HEK293 (cell line): ENCODE measurements at regions of chr17 and their contacts with region 1.

Region 1: GRCh38 chr17:27892866-27893769 is at the start of gene LYRM9:
- H3K4me3 ChIP-seq: peak within 1 kb of the TSS; percentile 63
- H3K27ac ChIP-seq: peak within 1 kb of the TSS; percentile 77; the same call in 1 of the 2 replicates
- H3K4me1 ChIP-seq: no peaks in the 10 kb centered on the region
- CTCF ChIP-seq: peak; percentile 68; the same call in 1 of the 2 replicates

Region 2: GRCh38 chr17:27879987-27880608 is 13.0 kb before region 1 on chr17:
- CTCF ChIA-PET with region 1: interaction called, 54 read pairs
- POLR2A ChIA-PET with region 1: interaction called, 9 read pairs
- H3K4me3 ChIP-seq: no peak overlapping the region
- H3K27ac ChIP-seq: no peak overlapping the region
- H3K4me1 ChIP-seq: no peaks in the 10 kb centered on the region
- CTCF ChIP-seq: peak; percentile 73

Region 3: GRCh38 chr17:27907976-27908558 is 14.9 kb after region 1 on chr17:
- CTCF ChIA-PET with region 1: interaction called, 19 read pairs
- POLR2A ChIA-PET with region 1: interaction called, 3 read pairs
- H3K4me3 ChIP-seq: no peak overlapping the region
- H3K27ac ChIP-seq: no peak overlapping the region
- H3K4me1 ChIP-seq: no peaks in the 10 kb centered on the region
- CTCF ChIP-seq: no peak

Region 4: DNA sequence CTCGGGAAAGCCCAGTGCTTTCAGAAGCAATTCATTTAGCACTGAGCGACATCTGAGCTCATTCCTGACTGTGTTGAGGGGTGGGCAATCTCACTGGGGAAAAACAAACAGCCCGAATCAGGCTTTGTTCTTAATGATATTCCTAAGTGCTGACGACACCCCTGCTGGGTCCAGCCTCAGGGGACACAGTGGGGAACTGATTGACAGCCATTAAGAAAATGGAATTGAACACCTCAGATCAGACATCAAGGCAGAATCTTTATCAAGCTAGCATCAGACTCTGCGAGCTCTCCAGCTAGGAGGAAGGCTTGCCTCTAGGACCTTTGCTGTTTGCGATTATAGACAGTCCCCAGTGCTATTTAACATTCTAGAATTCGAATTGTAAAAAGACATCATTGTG is 22.6 kb after region 1 on chr17:
- CTCF ChIA-PET with region 1: interaction called, 7 read pairs
- POLR2A ChIA-PET with region 1: interaction called, 12 read pairs
- H3K4me3 ChIP-seq: no peak overlapping the region
- H3K27ac ChIP-seq: no peak overlapping the region
- H3K4me1 ChIP-seq: peaks cover 5% of the 10 kb centered on the region; the same call in 1 of the 2 replicates
- CTCF ChIP-seq: no peak

Region 5: DNA sequence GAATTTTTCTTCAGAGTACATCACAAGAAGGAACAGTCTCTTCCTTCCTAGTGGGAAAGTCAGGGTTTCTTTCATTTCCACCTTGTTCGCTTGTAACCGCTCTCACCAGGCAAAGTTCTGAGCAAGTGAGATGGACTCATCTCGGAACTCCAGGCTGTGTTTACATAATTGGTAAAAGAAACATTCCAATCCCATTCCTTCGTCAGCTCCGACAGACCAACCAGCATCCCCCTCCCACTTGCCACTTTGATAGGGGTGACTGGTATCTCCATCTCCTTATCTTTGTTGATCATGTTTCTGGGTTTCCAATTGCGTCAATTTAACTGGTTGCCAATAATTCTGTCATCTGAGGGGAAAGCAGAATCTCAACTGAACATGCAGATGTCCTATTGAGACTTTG is 36.9 kb after region 1 on chr17:
- CTCF ChIA-PET with region 1: interaction called, 9 read pairs
- POLR2A ChIA-PET with region 1: interaction called, 11 read pairs
- H3K4me3 ChIP-seq: no peak overlapping the region
- H3K27ac ChIP-seq: no peak overlapping the region
- H3K4me1 ChIP-seq: no peaks in the 10 kb centered on the region; the same call in 1 of the 2 replicates
- CTCF ChIP-seq: no peak